ENCODE measurements at regions of chr3 and their contacts with region 1.

Region 1: GRCh38 chr3:98817547-98818041 is 54.5 kb downstream of the ST3GAL6 start:
- DNase-seq: peak in 4 of 5 donors; percentile 26 to 41 (median 39)
- H3K4me3 ChIP-seq: no peak overlapping the region
- H3K4me3 Mint-ChIP-seq: no peak overlapping the region
- H3K27ac ChIP-seq: no peak overlapping the region
- H3K27ac Mint-ChIP-seq: no peak overlapping the region
- H3K4me1 ChIP-seq: no peaks in the 10 kb centered on the region
- H3K4me1 Mint-ChIP-seq: no peaks in the 10 kb centered on the region
- H3K27me3 ChIP-seq: no peaks in the 10 kb centered on the region
- H3K27me3 Mint-ChIP-seq: peaks cover 0 to 2% of the 10 kb centered on the region in 2 donors

Region 2: GRCh38 chr3:98039322-98040024 is 778.1 kb before region 1 on chr3:
- CTCF ChIA-PET with region 1: interaction called, 47 read pairs
- POLR2A ChIA-PET with region 1: no interaction called
- intact Hi-C with region 1: loop called (anchors 1 kb)
- DNase-seq: peak; percentile 84 to 90 (median 89)
- H3K4me3 ChIP-seq: peak overlapping the region; percentile 57 to 58
- H3K4me3 Mint-ChIP-seq: peak overlapping the region; percentile 85 to 96 (median 88)
- H3K27ac ChIP-seq: peak overlapping the region; percentile 68
- H3K27ac Mint-ChIP-seq: peak overlapping the region; percentile 82 to 98 (median 96)
- H3K4me1 ChIP-seq: no peaks in the 10 kb centered on the region
- H3K4me1 Mint-ChIP-seq: peaks cover 2 to 8% (median 5%) of the 10 kb centered on the region in 4 donors
- H3K27me3 ChIP-seq: peaks cover 3% of the 10 kb centered on the region
- H3K27me3 Mint-ChIP-seq: peaks cover 7 to 10% of the 10 kb centered on the region in 2 donors

Region 3: DNA sequence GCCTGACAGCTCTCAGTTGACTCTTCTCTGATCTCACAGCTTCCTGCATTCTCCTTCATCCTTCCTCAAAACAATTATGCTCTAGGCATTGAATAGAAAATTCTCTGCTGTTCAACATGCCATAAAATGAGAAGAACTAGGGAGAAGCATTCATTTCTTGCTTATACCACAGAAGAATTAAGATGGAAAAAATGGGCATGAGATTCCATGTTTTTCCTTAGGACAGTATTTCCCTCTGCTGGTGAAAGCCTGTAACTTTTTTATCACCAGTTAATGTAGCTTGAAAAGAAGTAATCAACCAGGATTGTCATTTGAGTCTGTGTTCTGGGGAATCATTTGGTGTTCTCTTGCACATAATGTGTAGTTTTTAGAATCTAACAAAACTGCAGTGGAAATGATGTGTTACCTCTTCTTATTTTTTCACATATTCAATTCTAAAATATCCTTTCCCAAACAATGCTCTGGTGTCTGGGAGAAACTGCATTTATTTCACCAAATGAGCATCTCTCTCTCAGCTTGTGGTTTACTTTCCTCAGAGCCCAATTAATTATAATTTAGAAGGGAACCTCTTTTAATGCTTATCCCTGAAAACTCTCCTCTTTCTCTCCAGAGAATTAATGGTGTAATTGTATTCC is 176.7 kb after region 1 on chr3:
- CTCF ChIA-PET with region 1: no interaction called
- POLR2A ChIA-PET with region 1: no interaction called
- intact Hi-C with region 1: loop called (anchors 10 kb)
- DNase-seq: no peak
- H3K4me3 ChIP-seq: no peak overlapping the region
- H3K4me3 Mint-ChIP-seq: no peak overlapping the region
- H3K27ac ChIP-seq: no peak overlapping the region
- H3K27ac Mint-ChIP-seq: no peak overlapping the region
- H3K4me1 ChIP-seq: no peaks in the 10 kb centered on the region
- H3K4me1 Mint-ChIP-seq: no peaks in the 10 kb centered on the region
- H3K27me3 ChIP-seq: no peaks in the 10 kb centered on the region
- H3K27me3 Mint-ChIP-seq: no peaks in the 10 kb centered on the region

Region 4: DNA sequence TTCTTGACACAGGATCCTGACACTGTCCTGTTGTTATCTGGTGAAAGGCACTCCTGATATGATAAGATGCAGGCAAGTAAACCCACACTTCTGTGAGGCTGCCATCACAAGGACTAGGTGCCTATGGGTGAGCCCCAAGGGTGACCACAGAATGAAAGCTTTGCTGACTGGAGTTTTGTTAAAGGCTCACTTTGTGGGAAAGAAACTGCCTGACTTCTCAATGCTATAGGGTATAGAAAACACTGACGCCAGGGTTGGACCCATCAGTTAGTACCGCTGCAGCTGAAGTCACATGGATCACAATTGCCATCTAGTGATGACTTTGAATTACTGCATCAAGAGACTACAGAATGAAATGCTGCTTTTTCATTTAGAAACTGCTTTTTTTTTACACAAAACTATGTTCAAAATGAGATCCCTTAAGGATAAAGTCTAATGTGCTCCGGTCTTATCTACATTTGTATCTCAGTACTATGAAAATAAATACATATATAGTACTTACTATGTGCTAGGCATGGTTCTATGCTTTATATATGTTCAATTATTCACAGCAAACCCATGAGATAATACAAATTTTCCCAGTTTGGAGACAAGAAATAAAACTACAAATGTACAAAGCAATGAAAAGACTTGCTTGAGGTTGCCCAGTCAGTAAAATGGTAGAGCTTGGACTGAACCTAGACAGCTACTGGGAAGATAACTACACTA is 935.8 kb after region 1 on chr3:
- CTCF ChIA-PET with region 1: interaction called, 18 read pairs
- POLR2A ChIA-PET with region 1: no interaction called
- intact Hi-C with region 1: loop called (anchors 1 kb)
- DNase-seq: peak in 4 of 5 donors; percentile 1 to 18 (median 6)
- H3K4me3 ChIP-seq: no peak overlapping the region
- H3K4me3 Mint-ChIP-seq: no peak overlapping the region
- H3K27ac ChIP-seq: no peak overlapping the region
- H3K27ac Mint-ChIP-seq: no peak overlapping the region
- H3K4me1 ChIP-seq: no peaks in the 10 kb centered on the region
- H3K4me1 Mint-ChIP-seq: no peaks in the 10 kb centered on the region
- H3K27me3 ChIP-seq: no peaks in the 10 kb centered on the region
- H3K27me3 Mint-ChIP-seq: peaks cover 4 to 9% of the 10 kb centered on the region in 2 donors

Region 5: GRCh38 chr3:99808151-99808794 is 990.7 kb after region 1 on chr3:
- CTCF ChIA-PET with region 1: interaction called, 5 read pairs
- POLR2A ChIA-PET with region 1: no interaction called
- intact Hi-C with region 1: loop called (anchors 1 kb)
- DNase-seq: peak in 4 of 5 donors; percentile 32 to 43 (median 38)
- H3K4me3 ChIP-seq: no peak overlapping the region
- H3K4me3 Mint-ChIP-seq: no peak overlapping the region
- H3K27ac ChIP-seq: no peak overlapping the region
- H3K27ac Mint-ChIP-seq: no peak overlapping the region
- H3K4me1 ChIP-seq: no peaks in the 10 kb centered on the region
- H3K4me1 Mint-ChIP-seq: peaks cover 0 to 5% (median 4%) of the 10 kb centered on the region in 4 donors
- H3K27me3 ChIP-seq: no peaks in the 10 kb centered on the region
- H3K27me3 Mint-ChIP-seq: no peaks in the 10 kb centered on the region

Measured in CD4-positive, alpha-beta memory T cell (primary cell).